PC-9 (cell line): ENCODE measurements at regions of chrX and their contacts with region 1.

Region 1: DNA sequence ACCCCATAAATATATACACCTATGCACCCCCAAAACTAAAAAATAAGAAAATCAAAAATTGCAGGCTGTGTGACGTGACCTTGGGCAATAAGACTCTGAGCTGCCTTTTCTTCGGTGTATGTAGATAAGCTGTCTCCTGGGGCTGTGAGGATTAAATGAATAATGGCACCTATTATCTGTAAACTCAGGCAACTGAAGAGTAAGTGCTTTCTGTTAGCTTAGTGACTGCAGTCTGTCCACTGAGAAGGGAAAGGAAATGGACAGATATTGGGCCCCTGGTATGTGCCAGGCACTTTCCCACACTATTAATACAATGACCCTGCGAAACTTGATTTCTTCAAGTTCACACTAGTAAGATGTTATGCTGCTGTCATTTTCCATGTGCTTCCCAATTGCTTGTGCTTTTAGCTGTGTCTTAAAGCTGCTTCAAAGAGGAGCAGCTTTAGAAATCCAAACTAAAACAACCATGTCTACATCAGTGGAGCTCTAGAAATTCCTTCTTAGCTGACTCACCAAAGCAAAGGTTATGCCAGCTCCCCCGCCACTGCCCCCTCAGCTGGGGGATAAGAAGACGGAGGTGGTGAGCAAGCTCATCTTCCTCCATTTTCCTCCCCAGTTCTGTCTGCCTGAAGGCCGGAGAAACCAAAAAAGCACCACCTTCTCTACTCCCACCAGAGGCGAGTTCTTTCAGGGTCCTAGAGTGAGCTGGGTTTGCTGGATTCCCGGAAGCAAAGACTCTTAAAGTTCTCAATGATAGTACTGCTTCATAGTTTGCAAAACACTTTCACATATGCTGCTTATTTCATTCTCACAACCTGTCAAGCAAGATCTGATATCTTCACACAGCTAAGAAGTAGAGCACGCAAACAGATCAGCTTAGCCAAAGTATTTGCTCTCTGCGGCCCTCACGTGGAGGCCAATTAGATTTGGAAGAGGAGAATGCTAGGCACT is 8.8 kb upstream of the DGAT2L6 start:
- DNase-seq: peak; percentile 37 to 63
- H3K4me3 ChIP-seq: peak overlapping the region; percentile 34; the same call in 1 of the 2 replicates
- H3K27ac ChIP-seq: peak overlapping the region; percentile 58
- H3K4me1 ChIP-seq: peaks cover 24% of the 10 kb centered on the region; the same call in 1 of the 2 replicates
- H3K27me3 ChIP-seq: no peaks in the 10 kb centered on the region
- CTCF ChIP-seq: no peak

Region 2: GRCh38 chrX:69165087-69165651 is 1003.3 kb before region 1 on chrX and contains the start of gene PJA1:
- CTCF ChIA-PET with region 1: interaction called, 12 read pairs
- POLR2A ChIA-PET with region 1: interaction called, 3 read pairs
- intact Hi-C with region 1: no loop called
- DNase-seq: peak; percentile 53 to 59
- H3K4me3 ChIP-seq: peak within 1 kb of the TSS; percentile 62
- H3K27ac ChIP-seq: no peak within 1 kb of the TSS
- H3K4me1 ChIP-seq: 0 out of 2 replicates have a peak, but pooled peaks cover 8% of the 10 kb centered on the region
- H3K27me3 ChIP-seq: no peaks in the 10 kb centered on the region
- CTCF ChIP-seq: no peak
- total RNA-seq, gene PJA1: 22.7 and 27.7 TPM in 2 replicates